GM23248 (cell line): ENCODE measurements at regions of chr3 and their contacts with region 1.

Region 1: GRCh38 chr3:112931736-112932521 is 43.0 kb downstream of the CD200R1 start:
- DNase-seq: no peak
- H3K4me3 ChIP-seq: no peak overlapping the region
- H3K27ac ChIP-seq: no peak overlapping the region
- H3K4me1 ChIP-seq: no peaks in the 10 kb centered on the region
- H3K27me3 ChIP-seq: no peaks in the 10 kb centered on the region

Region 2: GRCh38 chr3:112847692-112848091 is 84.2 kb before region 1 on chr3:
- in situ Hi-C with region 1: loop called (anchors 25 kb)
- DNase-seq: no peak
- H3K4me3 ChIP-seq: no peak overlapping the region
- H3K27ac ChIP-seq: no peak overlapping the region
- H3K4me1 ChIP-seq: no peaks in the 10 kb centered on the region
- H3K27me3 ChIP-seq: no peaks in the 10 kb centered on the region

Region 3: GRCh38 chr3:113079218-113079961 is 147.5 kb after region 1 on chr3:
- in situ Hi-C with region 1: no loop called
- DNase-seq: no peak
- H3K4me3 ChIP-seq: 0 out of 2 replicates have a peak overlapping the region, but pooled peaks have one; percentile 10
- H3K27ac ChIP-seq: no peak overlapping the region
- H3K4me1 ChIP-seq: peaks cover 1% of the 10 kb centered on the region; the same call in 1 of the 2 replicates
- H3K27me3 ChIP-seq: no peaks in the 10 kb centered on the region